HCT116 (cell line): ENCODE measurements at regions of chr17 and their contacts with region 1.

Region 1: GRCh38 chr17:47669081-47669480 is 19.4 kb downstream of the KPNB1 start:
- DNase-seq: no peak
- ATAC-seq: no peak
- H3K4me3 ChIP-seq: no peak overlapping the region
- H3K27ac ChIP-seq: no peak overlapping the region
- H3K4me1 ChIP-seq: no peaks in the 10 kb centered on the region
- H3K27me3 ChIP-seq: no peaks in the 10 kb centered on the region
- CTCF ChIP-seq: no peak
- POLR2A ChIP-seq: no peak
- RAD21 ChIP-seq: no peak

Region 2: GRCh38 chr17:47654991-47655390 is 14.1 kb before region 1 on chr17:
- CTCF ChIA-PET with region 1: interaction called, 11 read pairs
- POLR2A ChIA-PET with region 1: interaction called, 12 read pairs
- RAD21 ChIA-PET with region 1: no interaction called
- intact Hi-C with region 1: loop called (anchors 2 kb)
- DNase-seq: no peak
- ATAC-seq: no peak
- H3K4me3 ChIP-seq: no peak overlapping the region
- H3K27ac ChIP-seq: no peak overlapping the region
- H3K4me1 ChIP-seq: peaks cover 8 to 10% of the 10 kb centered on the region in 2 experiments; a peak in 3 of 4 replicates
- H3K27me3 ChIP-seq: no peaks in the 10 kb centered on the region
- CTCF ChIP-seq: no peak
- POLR2A ChIP-seq: no peak
- RAD21 ChIP-seq: no peak